ENCODE measurements at regions of chr20 and their contacts with region 1.

Region 1: GRCh38 chr20:1263853-1264252 is 2.2 kb upstream of the SNPH start:
- DNase-seq: no peak
- H3K4me3 ChIP-seq: no peak overlapping the region
- H3K4me3 Mint-ChIP-seq: no peak overlapping the region
- H3K27ac Mint-ChIP-seq: no peak overlapping the region
- H3K4me1 ChIP-seq: no peaks in the 10 kb centered on the region
- H3K4me1 Mint-ChIP-seq: no peaks in the 10 kb centered on the region
- H3K27me3 ChIP-seq: no peaks in the 10 kb centered on the region
- H3K27me3 Mint-ChIP-seq: peaks cover 6% of the 10 kb centered on the region
- CTCF ChIP-seq: no peak

Region 2: GRCh38 chr20:1225783-1226654 is 37.8 kb before region 1 on chr20 and contains the start of gene RAD21L1:
- CTCF ChIA-PET with region 1: no interaction called
- POLR2A ChIA-PET with region 1: no interaction called
- intact Hi-C with region 1: loop called (anchors 2 kb)
- DNase-seq: peak; percentile 81 to 93
- H3K4me3 ChIP-seq: peak within 1 kb of the TSS; percentile 67
- H3K4me3 Mint-ChIP-seq: peak within 1 kb of the TSS; percentile 80
- H3K27ac Mint-ChIP-seq: no peak within 1 kb of the TSS
- H3K4me1 ChIP-seq: 0 out of 2 replicates have a peak, but pooled peaks cover 7% of the 10 kb centered on the region
- H3K4me1 Mint-ChIP-seq: no peaks in the 10 kb centered on the region
- H3K27me3 ChIP-seq: no peaks in the 10 kb centered on the region
- H3K27me3 Mint-ChIP-seq: peaks cover 19% of the 10 kb centered on the region
- CTCF ChIP-seq: no peak
- total RNA-seq, gene RAD21L1: not detected in 2 replicates

Region 3: DNA sequence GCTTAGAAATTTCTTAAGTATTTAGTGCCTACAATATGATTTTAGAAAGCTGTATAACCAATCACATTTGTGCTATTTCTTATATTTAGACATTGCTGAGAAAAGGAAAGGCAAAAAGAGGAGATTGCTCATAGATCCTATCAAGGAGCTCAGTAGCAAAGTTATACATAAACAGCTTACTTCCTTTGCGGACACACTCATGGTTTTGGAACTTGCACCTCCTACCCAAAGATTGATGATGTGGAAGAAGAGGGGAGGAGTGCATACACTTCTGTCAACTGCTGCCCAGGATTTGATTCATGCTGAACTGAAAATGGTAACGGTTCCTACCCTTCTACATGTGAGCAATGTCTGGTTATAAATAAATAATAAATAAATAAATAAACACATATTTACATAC is 21.3 kb before region 1 on chr20:
- CTCF ChIA-PET with region 1: no interaction called
- POLR2A ChIA-PET with region 1: no interaction called
- intact Hi-C with region 1: loop called (anchors 1 kb)
- DNase-seq: no peak
- H3K4me3 ChIP-seq: no peak overlapping the region
- H3K4me3 Mint-ChIP-seq: no peak overlapping the region
- H3K27ac Mint-ChIP-seq: no peak overlapping the region
- H3K4me1 ChIP-seq: no peaks in the 10 kb centered on the region
- H3K4me1 Mint-ChIP-seq: no peaks in the 10 kb centered on the region
- H3K27me3 ChIP-seq: no peaks in the 10 kb centered on the region
- H3K27me3 Mint-ChIP-seq: peaks cover 18% of the 10 kb centered on the region
- CTCF ChIP-seq: no peak

Measured in Caco-2 (cell line).